ENCODE measurements at regions of chr1 and their contacts with region 1.

Region 1: GRCh38 chr1:192477630-192478029 is 97.9 kb upstream of the RGS1 start:
- DNase-seq: peak in 4 of 5 donors; percentile 47 to 52 (median 48)
- H3K4me3 ChIP-seq: no peak overlapping the region
- H3K4me3 Mint-ChIP-seq: no peak overlapping the region
- H3K27ac ChIP-seq: no peak overlapping the region
- H3K27ac Mint-ChIP-seq: peak overlapping the region in 1 of 7 donors; percentile 19
- H3K4me1 ChIP-seq: no peaks in the 10 kb centered on the region
- H3K4me1 Mint-ChIP-seq: no peaks in the 10 kb centered on the region
- H3K27me3 ChIP-seq: no peaks in the 10 kb centered on the region
- H3K27me3 Mint-ChIP-seq: peaks cover 0 to 6% of the 10 kb centered on the region in 2 donors

Region 2: GRCh38 chr1:192489748-192490147 is 12.1 kb after region 1 on chr1:
- CTCF ChIA-PET with region 1: interaction called, 12 read pairs
- POLR2A ChIA-PET with region 1: no interaction called
- intact Hi-C with region 1: no loop called
- DNase-seq: peak in 3 of 5 donors; percentile 22 to 61 (median 30)
- H3K4me3 ChIP-seq: no peak overlapping the region
- H3K4me3 Mint-ChIP-seq: no peak overlapping the region
- H3K27ac ChIP-seq: no peak overlapping the region
- H3K27ac Mint-ChIP-seq: peak overlapping the region in 2 of 7 donors; percentile 17 to 29
- H3K4me1 ChIP-seq: no peaks in the 10 kb centered on the region
- H3K4me1 Mint-ChIP-seq: peaks cover 0 to 3% (median 0%) of the 10 kb centered on the region in 4 donors
- H3K27me3 ChIP-seq: no peaks in the 10 kb centered on the region
- H3K27me3 Mint-ChIP-seq: no peaks in the 10 kb centered on the region

Region 3: DNA sequence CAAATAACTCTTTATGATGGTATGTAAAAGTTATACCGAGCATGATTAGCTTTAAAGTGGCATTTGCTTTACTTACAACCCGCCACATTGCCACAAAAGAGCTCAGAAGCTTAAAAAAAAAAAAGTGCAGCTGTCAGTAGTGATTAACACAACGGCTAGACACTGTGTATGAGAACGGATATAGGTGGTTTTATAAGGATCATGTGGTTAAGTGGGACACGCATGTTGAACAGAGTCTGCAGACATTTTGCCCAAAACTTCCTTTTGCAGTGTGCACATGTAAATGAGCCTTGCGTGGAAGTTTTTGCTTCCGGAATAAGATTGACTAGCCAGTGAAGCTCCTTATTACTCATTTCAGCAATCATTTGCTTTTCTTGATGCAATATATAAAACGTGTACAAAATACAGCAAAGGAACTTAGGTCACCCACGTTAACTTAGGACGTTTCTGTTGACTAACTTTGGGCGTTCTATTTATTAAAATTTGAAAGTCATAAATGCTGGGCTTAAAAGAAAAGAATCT is 39.2 kb after region 1 on chr1:
- CTCF ChIA-PET with region 1: interaction called, 31 read pairs
- POLR2A ChIA-PET with region 1: no interaction called
- intact Hi-C with region 1: loop called (anchors 2 kb)
- DNase-seq: peak; percentile 83 to 90 (median 86)
- H3K4me3 ChIP-seq: no peak overlapping the region
- H3K4me3 Mint-ChIP-seq: peak overlapping the region; percentile 56 to 83 (median 76)
- H3K27ac ChIP-seq: peak overlapping the region; percentile 35
- H3K27ac Mint-ChIP-seq: peak overlapping the region; percentile 81 to 98 (median 94)
- H3K4me1 ChIP-seq: peaks cover 28% of the 10 kb centered on the region
- H3K4me1 Mint-ChIP-seq: peaks cover 28 to 47% (median 38%) of the 10 kb centered on the region in 4 donors
- H3K27me3 ChIP-seq: no peaks in the 10 kb centered on the region
- H3K27me3 Mint-ChIP-seq: no peaks in the 10 kb centered on the region

Region 4: DNA sequence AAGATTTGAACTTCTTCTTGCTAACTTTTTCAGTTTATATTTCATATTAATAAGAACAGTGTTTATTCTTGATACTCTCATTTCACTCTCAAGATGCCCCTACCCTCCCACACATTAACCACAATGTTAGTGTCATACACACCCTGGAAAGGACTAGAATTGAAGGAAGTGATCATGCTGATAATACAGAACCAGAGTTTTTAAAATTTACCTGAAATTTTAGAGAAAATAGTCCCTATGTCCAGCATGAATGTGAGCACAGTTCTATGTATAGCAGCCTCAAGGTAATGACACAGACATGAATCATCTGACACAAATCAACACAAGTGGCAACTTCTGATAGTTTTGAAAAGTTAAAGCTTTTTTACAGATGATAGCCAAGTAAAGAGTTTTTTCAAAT is 123.9 kb after region 1 on chr1:
- CTCF ChIA-PET with region 1: interaction called, 76 read pairs
- POLR2A ChIA-PET with region 1: no interaction called
- intact Hi-C with region 1: no loop called
- DNase-seq: no peak
- H3K4me3 ChIP-seq: no peak overlapping the region
- H3K4me3 Mint-ChIP-seq: no peak overlapping the region
- H3K27ac ChIP-seq: no peak overlapping the region
- H3K27ac Mint-ChIP-seq: no peak overlapping the region
- H3K4me1 ChIP-seq: no peaks in the 10 kb centered on the region
- H3K4me1 Mint-ChIP-seq: peaks cover 0 to 12% (median 5%) of the 10 kb centered on the region in 4 donors
- H3K27me3 ChIP-seq: no peaks in the 10 kb centered on the region
- H3K27me3 Mint-ChIP-seq: no peaks in the 10 kb centered on the region

Region 5: GRCh38 chr1:193019442-193020026 is 541.9 kb after region 1 on chr1:
- CTCF ChIA-PET with region 1: interaction called, 31 read pairs
- POLR2A ChIA-PET with region 1: no interaction called
- intact Hi-C with region 1: loop called (anchors 1 kb)
- DNase-seq: peak in 4 of 5 donors; percentile 39 to 45 (median 42)
- H3K4me3 ChIP-seq: no peak overlapping the region
- H3K4me3 Mint-ChIP-seq: no peak overlapping the region
- H3K27ac ChIP-seq: no peak overlapping the region
- H3K27ac Mint-ChIP-seq: no peak overlapping the region
- H3K4me1 ChIP-seq: no peaks in the 10 kb centered on the region
- H3K4me1 Mint-ChIP-seq: no peaks in the 10 kb centered on the region
- H3K27me3 ChIP-seq: no peaks in the 10 kb centered on the region
- H3K27me3 Mint-ChIP-seq: no peaks in the 10 kb centered on the region

Region 6: DNA sequence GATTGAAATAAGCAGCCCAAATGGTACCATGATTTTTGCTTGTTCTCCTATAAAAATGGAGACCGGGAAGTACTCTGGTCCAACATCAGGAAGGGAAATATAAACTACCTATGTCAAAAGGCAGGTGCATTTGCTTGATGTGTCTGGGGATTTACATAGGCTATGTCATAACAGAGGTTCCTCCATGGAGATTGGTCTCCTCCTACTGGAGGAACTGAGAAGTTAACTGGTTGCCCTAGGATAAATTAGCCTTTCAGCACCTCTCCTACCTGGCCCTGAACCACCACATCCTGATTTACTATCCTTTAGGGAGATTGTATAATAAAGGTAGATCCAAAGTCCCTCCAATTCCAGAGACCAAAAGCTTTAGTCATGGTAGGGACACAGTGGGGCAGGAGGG is 1818.1 kb after region 1 on chr1:
- CTCF ChIA-PET with region 1: no interaction called
- POLR2A ChIA-PET with region 1: no interaction called
- intact Hi-C with region 1: loop called (anchors 10 kb)
- DNase-seq: peak; percentile 48 to 72 (median 68)
- H3K4me3 ChIP-seq: no peak overlapping the region
- H3K4me3 Mint-ChIP-seq: no peak overlapping the region
- H3K27ac ChIP-seq: no peak overlapping the region
- H3K27ac Mint-ChIP-seq: peak overlapping the region; percentile 4 to 69 (median 40)
- H3K4me1 ChIP-seq: peaks cover 12% of the 10 kb centered on the region
- H3K4me1 Mint-ChIP-seq: peaks cover 13 to 16% (median 14%) of the 10 kb centered on the region in 4 donors
- H3K27me3 ChIP-seq: no peaks in the 10 kb centered on the region
- H3K27me3 Mint-ChIP-seq: no peaks in the 10 kb centered on the region